H1 (cell line): ENCODE measurements at regions of chr17 and their contacts with region 1.

Region 1: DNA sequence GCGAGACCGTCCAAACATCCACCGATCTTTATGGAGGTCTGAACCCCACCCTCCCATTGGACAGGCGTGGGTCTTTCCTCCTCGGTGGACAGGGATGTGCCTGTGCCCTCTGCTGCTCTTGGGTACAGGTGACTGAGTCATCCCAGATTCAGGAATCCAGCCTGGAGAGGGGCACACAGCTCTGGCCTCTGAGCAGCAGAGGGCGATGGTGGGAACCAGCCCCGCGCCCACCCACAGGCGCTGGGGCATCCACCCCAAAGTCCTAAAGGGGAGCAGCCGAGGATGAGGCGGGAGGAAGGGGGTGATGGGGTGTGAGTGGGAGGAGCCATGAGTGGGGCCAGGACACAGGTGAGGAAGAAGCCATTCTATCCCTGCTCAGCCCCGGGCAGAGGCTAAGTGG is 34.9 kb downstream of the ENGASE start:
- DNase-seq: peak in 1 of 2 experiments; percentile 72
- H3K4me3 ChIP-seq: no peak overlapping the region
- H3K27ac ChIP-seq: no peak overlapping the region
- H3K4me1 ChIP-seq: peaks cover 0 to 3% (median 0%) of the 10 kb centered on the region in 4 experiments; a peak in 3 of 7 replicates
- H3K27me3 ChIP-seq: no peaks in the 10 kb centered on the region
- CTCF ChIP-seq: peak; percentile 73 to 78 (median 78)
- EP300 ChIP-seq: no peak
- POLR2A ChIP-seq: no peak
- RAD21 ChIP-seq: peak; percentile 52 to 58

Region 2: GRCh38 chr17:79082311-79083190 is 27.0 kb before region 1 on chr17:
- CTCF ChIA-PET with region 1: interaction called, 29 read pairs
- POLR2A ChIA-PET with region 1: no interaction called
- DNase-seq: peak in 1 of 2 experiments; percentile 91
- H3K4me3 ChIP-seq: no peak overlapping the region
- H3K27ac ChIP-seq: no peak overlapping the region
- H3K4me1 ChIP-seq: peaks cover 0 to 2% (median under 1%) of the 10 kb centered on the region in 4 experiments; a peak in 1 of 7 replicates
- H3K27me3 ChIP-seq: no peaks in the 10 kb centered on the region
- CTCF ChIP-seq: peak; percentile 93 to 95 (median 94)
- EP300 ChIP-seq: no peak
- POLR2A ChIP-seq: no peak
- RAD21 ChIP-seq: peak; percentile 64 to 69

Region 3: GRCh38 chr17:79095345-79096055 is 14.1 kb before region 1 on chr17:
- CTCF ChIA-PET with region 1: interaction called, 16 read pairs
- POLR2A ChIA-PET with region 1: interaction called, 4 read pairs
- DNase-seq: no peak
- H3K4me3 ChIP-seq: no peak overlapping the region
- H3K27ac ChIP-seq: no peak overlapping the region
- H3K4me1 ChIP-seq: peaks cover 0 to 16% (median 5%) of the 10 kb centered on the region in 4 experiments; a peak in 5 of 7 replicates
- H3K27me3 ChIP-seq: no peaks in the 10 kb centered on the region
- CTCF ChIP-seq: no peak
- EP300 ChIP-seq: no peak
- POLR2A ChIP-seq: no peak
- RAD21 ChIP-seq: no peak

Region 4: GRCh38 chr17:79126139-79126538 is 16.6 kb after region 1 on chr17:
- CTCF ChIA-PET with region 1: interaction called, 15 read pairs
- POLR2A ChIA-PET with region 1: interaction called, 5 read pairs
- DNase-seq: peak in 1 of 2 experiments; percentile 69
- H3K4me3 ChIP-seq: no peak overlapping the region
- H3K27ac ChIP-seq: no peak overlapping the region
- H3K4me1 ChIP-seq: no peaks in the 10 kb centered on the region
- H3K27me3 ChIP-seq: no peaks in the 10 kb centered on the region
- CTCF ChIP-seq: peak; percentile 57 to 79 (median 68)
- EP300 ChIP-seq: no peak
- POLR2A ChIP-seq: no peak
- RAD21 ChIP-seq: peak; percentile 64 to 74